ENCODE measurements at regions of chr3 and their contacts with region 1.

Region 1: DNA sequence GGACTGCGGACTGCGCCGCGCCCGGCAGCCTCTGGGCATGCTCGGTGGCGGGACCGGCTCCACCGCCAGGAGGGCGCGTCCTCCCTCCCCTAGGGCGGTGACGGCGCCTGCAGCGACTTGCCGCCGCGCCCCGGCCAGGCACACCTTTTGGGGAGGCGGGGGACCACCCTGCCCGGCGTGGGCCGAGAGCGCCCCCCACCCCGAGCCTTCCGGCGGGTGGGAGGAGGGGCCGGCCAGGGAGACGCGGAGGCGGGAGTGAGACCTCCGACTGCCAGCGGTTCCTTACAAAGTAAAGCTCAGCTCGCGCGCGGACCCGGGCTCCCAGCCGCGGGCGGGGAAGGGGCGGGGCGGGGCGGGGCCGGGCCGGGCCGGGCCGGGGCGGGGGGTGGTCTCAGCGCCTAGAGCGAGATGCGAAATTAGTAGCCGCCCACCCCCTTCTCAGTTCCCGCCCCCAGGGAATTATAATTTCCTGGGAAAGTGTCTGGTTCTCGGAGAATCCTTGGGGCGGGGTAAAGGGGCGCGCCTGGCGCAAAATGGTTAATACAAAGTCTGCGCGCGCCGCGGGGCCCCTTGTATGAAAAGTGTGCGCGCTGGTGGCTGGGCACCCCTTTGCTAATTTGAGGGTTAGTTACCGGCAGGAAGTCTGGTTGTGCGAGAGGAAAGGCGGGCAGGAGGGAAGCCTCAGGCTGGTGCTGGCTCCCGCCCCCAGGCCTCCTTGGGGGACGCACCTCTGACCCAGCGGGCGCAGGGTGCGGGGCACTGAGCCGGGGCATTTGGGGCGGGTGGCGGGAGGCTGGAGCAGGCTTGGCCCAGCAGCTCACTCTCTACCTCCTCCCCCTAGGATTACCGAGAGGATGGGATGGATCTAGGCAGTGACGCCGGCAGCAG is 224.8 kb upstream of the IL12A start:
- DNase-seq: peak; percentile 84
- ATAC-seq: peak; percentile 68
- H3K4me3 ChIP-seq: peak overlapping the region; percentile 65
- H3K27ac ChIP-seq: peak overlapping the region; percentile 91
- H3K4me1 ChIP-seq: peaks cover 14% of the 10 kb centered on the region
- H3K27me3 ChIP-seq: no peaks in the 10 kb centered on the region
- CTCF ChIP-seq: no peak
- POLR2A ChIP-seq: peak; percentile 74
- RAD21 ChIP-seq: 0 out of 2 replicates have a peak, but pooled peaks have one; percentile 10

Region 2: GRCh38 chr3:159458010-159458409 is 305.8 kb before region 1 on chr3:
- CTCF ChIA-PET with region 1: no interaction called
- POLR2A ChIA-PET with region 1: no interaction called
- dilution Hi-C with region 1: no loop called
- in situ Hi-C with region 1: no loop called
- intact Hi-C with region 1: loop called (anchors 10 kb)
- DNase-seq: peak; percentile 97
- ATAC-seq: peak; percentile 87
- H3K4me3 ChIP-seq: no peak overlapping the region
- H3K27ac ChIP-seq: 0 out of 2 replicates have a peak overlapping the region, but pooled peaks have one; percentile 3
- H3K4me1 ChIP-seq: peaks cover 5% of the 10 kb centered on the region
- H3K27me3 ChIP-seq: no peaks in the 10 kb centered on the region
- CTCF ChIP-seq: no peak
- POLR2A ChIP-seq: no peak
- RAD21 ChIP-seq: no peak

Region 3: DNA sequence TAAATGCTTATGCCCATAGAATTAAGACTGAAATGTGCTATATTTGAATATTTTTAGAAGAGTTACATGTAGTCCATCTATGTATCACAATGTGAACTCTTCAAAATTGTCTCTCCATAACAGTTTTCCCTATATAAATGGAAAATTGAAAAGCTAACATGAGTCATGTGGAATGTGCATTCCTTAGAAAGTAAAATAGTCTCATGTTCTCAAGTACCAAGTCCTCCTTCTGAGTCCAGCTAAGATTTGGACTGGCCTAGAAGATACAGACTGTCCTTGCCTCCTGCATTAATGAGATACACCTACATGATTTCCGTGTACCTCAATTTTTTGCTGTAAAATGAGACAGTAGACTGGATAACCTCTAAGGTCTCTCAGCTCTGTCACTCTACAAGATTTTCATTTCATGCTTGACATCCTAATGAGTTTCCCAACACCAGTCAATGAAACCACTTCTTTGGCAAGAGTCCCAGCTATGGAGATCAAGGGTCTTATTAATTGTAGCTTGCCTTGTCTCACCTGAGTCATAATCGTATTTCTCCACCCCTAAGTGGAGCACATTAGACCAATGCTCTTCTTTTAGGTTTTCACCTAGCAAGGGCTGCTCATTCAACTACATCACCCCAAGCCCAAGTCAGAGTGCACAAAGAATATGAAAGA is 125.8 kb before region 1 on chr3:
- CTCF ChIA-PET with region 1: no interaction called
- POLR2A ChIA-PET with region 1: no interaction called
- dilution Hi-C with region 1: no loop called
- in situ Hi-C with region 1: no loop called
- intact Hi-C with region 1: loop called (anchors 5 kb)
- DNase-seq: peak; percentile 79
- ATAC-seq: peak; percentile 89
- H3K4me3 ChIP-seq: no peak overlapping the region
- H3K27ac ChIP-seq: no peak overlapping the region
- H3K4me1 ChIP-seq: peaks cover 12% of the 10 kb centered on the region
- H3K27me3 ChIP-seq: no peaks in the 10 kb centered on the region; the same call in 1 of the 2 replicates
- CTCF ChIP-seq: no peak
- POLR2A ChIP-seq: no peak
- RAD21 ChIP-seq: no peak

Region 4: DNA sequence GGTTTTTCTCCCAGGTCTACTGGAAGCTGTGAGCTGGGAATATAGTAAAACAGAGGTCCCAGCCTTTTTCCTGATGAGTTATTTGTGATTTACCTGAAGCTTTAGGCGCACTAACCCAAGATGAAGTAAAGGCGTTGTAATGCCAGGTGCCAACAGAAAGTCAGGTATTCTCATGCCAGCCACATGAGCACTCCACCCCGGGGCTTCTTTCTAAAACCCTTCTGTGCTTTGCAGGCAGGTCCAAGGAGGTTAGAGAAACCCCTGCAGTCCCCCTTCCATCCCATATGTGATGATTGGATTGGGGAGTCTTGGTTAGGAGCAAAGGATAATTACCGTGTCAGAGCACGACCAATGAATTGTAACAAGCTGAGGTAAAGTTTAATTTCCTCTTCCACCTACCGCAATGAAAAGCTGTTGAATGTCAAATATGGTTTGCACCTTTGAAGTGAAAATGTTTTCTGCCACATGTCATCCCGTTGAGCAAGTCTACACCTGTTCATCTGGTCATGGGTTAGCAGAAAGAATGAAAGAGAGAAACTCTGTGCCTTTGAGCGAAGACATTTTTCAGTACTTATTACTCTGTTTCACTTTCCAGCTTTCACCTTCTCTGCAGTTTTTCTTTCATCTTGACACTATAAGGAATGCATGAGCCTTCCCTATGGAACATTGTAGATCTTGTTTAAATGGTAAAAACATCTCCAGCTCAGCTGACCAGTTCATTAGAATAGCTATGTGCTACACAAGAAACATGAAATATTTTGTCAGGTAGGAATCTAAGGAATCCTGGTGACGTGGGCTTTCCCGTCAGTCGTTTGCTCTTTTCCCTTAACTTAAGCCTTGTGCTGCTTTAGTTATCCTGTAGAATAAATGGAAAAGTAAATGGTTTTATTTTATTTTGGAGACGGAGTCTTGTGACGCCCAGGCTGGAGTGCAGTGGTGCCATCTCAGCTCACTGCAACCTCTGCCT is 20.2 kb after region 1 on chr3:
- CTCF ChIA-PET with region 1: interaction called, 7 read pairs
- POLR2A ChIA-PET with region 1: no interaction called
- dilution Hi-C with region 1: no loop called
- in situ Hi-C with region 1: no loop called
- intact Hi-C with region 1: loop called (anchors 2 kb)
- DNase-seq: no peak
- ATAC-seq: no peak
- H3K4me3 ChIP-seq: no peak overlapping the region
- H3K27ac ChIP-seq: no peak overlapping the region
- H3K4me1 ChIP-seq: peaks cover 28% of the 10 kb centered on the region
- H3K27me3 ChIP-seq: no peaks in the 10 kb centered on the region
- CTCF ChIP-seq: no peak
- POLR2A ChIP-seq: no peak
- RAD21 ChIP-seq: no peak

Region 5: DNA sequence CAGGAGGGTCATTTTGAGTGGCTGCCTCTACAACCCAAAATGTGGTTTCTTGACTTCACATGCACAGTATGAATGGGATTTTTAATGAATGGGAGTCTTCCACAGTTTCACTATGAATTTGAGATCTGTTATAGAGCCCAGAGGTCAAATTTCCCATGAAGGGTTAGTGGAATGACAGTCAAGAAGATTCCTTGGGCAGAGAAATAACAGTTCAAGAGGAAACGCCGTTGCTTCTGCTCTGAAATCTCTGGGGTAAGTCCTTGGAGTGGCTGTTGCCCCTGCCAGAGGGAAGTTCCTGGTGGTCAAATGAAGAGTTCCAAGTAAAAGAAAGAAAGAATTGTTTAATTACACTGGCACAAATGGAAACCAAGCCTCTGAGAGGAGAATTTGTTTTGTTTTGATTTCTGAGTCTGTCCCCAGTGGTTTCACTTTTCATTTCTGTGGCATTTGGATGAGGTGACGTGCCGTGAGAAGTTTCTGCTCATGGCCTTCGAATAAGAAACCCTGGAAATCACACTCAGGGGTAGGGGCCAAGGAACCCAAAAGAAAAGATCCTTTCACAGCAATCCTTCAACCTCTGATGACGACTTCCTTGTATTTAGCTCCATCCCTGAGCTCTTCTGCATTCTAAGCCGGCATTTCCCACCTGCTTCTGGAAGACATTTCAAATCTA is 147.3 kb after region 1 on chr3:
- CTCF ChIA-PET with region 1: no interaction called
- POLR2A ChIA-PET with region 1: no interaction called
- dilution Hi-C with region 1: no loop called
- in situ Hi-C with region 1: no loop called
- intact Hi-C with region 1: no loop called
- DNase-seq: no peak
- ATAC-seq: no peak
- H3K4me3 ChIP-seq: no peak overlapping the region
- H3K27ac ChIP-seq: no peak overlapping the region
- H3K4me1 ChIP-seq: peaks cover 6% of the 10 kb centered on the region
- H3K27me3 ChIP-seq: no peaks in the 10 kb centered on the region
- CTCF ChIP-seq: no peak
- POLR2A ChIP-seq: no peak
- RAD21 ChIP-seq: no peak

Region 6: DNA sequence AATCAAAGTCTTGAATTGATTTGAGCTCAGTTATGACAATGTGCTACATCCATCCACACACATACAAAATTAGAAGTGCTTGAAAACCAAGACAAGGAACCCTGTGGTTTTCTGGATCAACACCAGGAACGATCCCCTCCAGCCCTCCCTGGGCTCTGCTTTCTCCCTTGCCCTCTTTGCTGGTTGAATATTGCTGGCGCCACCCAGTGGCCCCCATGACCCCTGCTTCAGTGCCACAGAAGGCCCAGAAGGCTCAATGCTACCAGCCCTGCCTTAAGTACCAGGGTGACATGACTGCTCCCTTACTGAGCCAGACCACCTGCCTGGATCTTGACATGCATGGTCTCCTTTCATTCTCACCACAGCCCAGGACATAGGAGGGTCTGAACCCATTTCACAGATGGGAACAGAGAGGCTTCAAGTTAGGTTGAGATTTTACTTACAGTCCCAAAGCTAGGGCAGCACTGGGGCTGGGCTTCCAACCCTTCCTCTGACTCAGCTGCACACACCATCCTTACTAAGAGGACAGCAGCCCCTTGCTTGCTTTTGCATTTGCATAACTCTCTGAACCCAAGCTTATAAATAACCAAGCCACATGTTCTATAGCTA is 239.8 kb after region 1 on chr3:
- CTCF ChIA-PET with region 1: interaction called, 3 read pairs
- POLR2A ChIA-PET with region 1: no interaction called
- dilution Hi-C with region 1: no loop called
- in situ Hi-C with region 1: no loop called
- intact Hi-C with region 1: loop called (anchors 2 kb)
- DNase-seq: peak; percentile 31
- ATAC-seq: peak; percentile 64
- H3K4me3 ChIP-seq: no peak overlapping the region
- H3K27ac ChIP-seq: no peak overlapping the region
- H3K4me1 ChIP-seq: 0 out of 2 replicates have a peak, but pooled peaks cover 1% of the 10 kb centered on the region
- H3K27me3 ChIP-seq: no peaks in the 10 kb centered on the region
- CTCF ChIP-seq: peak; percentile 51
- POLR2A ChIP-seq: no peak
- RAD21 ChIP-seq: peak; percentile 59